Adrenal gland (tissue), 19 donors: ENCODE measurements at regions of chr13 and their contacts with region 1.

Region 1: GRCh38 chr13:113029487-113030258 is 60.7 kb downstream of the MCF2L start:
- DNase-seq: peak in 2 of 7 donors; percentile 34 to 50
- H3K4me3 ChIP-seq: no peak overlapping the region
- H3K27ac ChIP-seq: no peak overlapping the region
- H3K4me1 ChIP-seq: no peaks in the 10 kb centered on the region
- H3K27me3 ChIP-seq: no peaks in the 10 kb centered on the region
- CTCF ChIP-seq: peak; percentile 50 to 69 (median 65)
- POLR2A ChIP-seq: no peak

Region 2: GRCh38 chr13:112783135-112783977 is 246.3 kb before region 1 on chr13:
- intact Hi-C with region 1: no loop called
- DNase-seq: peak in 1 of 7 donors; percentile 48
- H3K4me3 ChIP-seq: no peak overlapping the region
- H3K27ac ChIP-seq: peak overlapping the region; percentile 37 to 91 (median 78)
- H3K4me1 ChIP-seq: peaks cover 12 to 18% of the 10 kb centered on the region in 2 donors
- H3K27me3 ChIP-seq: no peaks in the 10 kb centered on the region
- CTCF ChIP-seq: no peak
- POLR2A ChIP-seq: no peak

Region 3: DNA sequence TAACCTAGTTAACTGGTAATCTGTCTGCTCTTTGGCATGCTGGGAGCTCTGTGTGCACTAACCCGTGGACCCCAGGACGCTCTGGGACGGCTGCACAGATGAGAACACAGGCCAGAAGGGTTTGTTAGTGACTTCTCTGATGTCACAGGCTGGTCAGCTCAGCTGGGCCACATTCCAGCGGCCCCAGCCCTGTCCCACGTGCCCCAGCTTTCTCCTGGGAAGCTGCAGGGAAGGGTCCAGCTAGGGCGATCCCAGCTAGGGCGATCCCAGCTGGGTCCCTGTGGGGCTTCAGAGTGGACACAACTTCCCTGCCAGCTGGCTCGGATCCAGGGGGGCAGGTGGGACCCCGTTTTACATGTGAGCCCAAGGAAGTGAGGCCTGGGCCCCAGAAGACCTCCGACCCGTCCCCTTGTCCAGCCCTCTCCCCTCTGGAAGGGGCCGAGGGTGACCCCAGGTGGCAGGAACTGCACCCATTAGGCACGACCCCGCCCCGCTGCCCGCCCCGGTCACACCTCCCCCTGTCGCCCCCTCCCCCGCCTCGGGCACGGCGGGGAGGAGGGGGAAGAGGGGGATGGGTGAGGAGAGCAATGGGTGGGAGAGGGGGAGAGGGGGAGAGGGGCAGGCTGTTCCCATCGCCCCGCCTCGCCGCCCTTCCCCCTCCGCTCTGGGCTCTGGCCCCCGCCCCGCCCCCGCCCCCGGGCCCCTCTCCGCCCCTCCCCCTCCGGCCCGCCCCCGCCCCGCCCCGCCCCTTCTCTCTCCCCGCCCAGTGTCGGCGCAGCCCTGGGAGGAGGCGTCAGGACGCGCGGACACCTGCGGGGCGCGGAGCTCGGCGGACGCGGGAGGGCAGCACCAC is 135.9 kb before region 1 on chr13:
- intact Hi-C with region 1: no loop called
- DNase-seq: peak in 1 of 7 donors; percentile 42
- H3K4me3 ChIP-seq: peak overlapping the region in 1 of 4 donors; percentile 56
- H3K27ac ChIP-seq: no peak overlapping the region
- H3K4me1 ChIP-seq: peaks cover 6 to 15% of the 10 kb centered on the region in 2 donors
- H3K27me3 ChIP-seq: peaks cover 16% of the 10 kb centered on the region
- CTCF ChIP-seq: no peak
- POLR2A ChIP-seq: no peak

Region 4: GRCh38 chr13:112942689-112943308 is 86.9 kb before region 1 on chr13:
- intact Hi-C with region 1: loop called (anchors 5 kb)
- DNase-seq: peak; percentile 92 to 98 (median 96)
- H3K4me3 ChIP-seq: peak overlapping the region in 2 of 4 donors; percentile 7 to 52
- H3K27ac ChIP-seq: peak overlapping the region in 3 of 5 donors; percentile 15 to 63 (median 23)
- H3K4me1 ChIP-seq: peaks cover 9 to 10% of the 10 kb centered on the region in 2 donors
- H3K27me3 ChIP-seq: no peaks in the 10 kb centered on the region
- CTCF ChIP-seq: peak; percentile 86 to 97 (median 94)
- POLR2A ChIP-seq: no peak

Region 5: DNA sequence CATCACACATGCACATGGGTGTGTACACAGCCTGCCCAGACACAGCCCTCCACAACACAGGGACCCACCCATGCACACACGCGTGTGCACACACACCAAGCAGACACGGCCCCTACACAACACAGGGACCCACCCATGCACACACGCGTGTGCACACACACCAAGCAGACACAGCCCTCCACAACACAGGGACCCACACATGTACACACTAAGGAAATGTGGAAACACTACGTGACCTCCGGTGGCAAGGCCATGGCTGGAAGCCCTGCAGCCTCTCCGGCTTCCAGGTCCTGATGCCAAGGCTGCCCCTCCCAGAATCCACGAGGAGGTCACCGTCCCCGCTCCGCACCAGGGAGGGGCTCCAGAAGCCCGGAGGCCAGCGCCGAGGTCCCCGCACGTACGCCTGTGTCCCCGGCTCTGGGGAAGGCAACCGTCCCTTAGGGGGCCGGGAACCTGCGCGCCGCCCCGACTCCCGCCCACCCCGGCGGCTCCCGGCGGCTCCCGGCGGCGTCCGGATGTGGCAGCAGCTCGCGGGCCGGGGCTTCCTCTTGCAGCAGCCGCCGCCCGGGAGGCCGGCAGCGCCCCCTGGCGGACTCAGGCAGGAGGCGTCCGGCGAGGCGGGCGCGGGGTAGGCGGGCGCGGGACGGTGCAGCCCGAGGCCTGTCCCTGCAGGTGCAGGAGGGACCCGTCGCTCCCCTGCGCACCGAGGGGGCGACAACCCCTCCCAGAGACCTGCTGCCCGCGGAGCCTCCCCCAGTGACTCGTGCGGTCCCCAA is 364.1 kb after region 1 on chr13:
- intact Hi-C with region 1: loop called (anchors 5 to 10 kb)
- DNase-seq: peak; percentile 66 to 88 (median 81)
- H3K4me3 ChIP-seq: peak overlapping the region in 3 of 4 donors; percentile 46 to 94 (median 56)
- H3K27ac ChIP-seq: peak overlapping the region in 1 of 5 donors; percentile 45
- H3K4me1 ChIP-seq: peaks cover 4 to 11% of the 10 kb centered on the region in 2 donors
- H3K27me3 ChIP-seq: no peaks in the 10 kb centered on the region
- CTCF ChIP-seq: peak in 5 of 6 experiments; percentile 15 to 97 (median 92)
- POLR2A ChIP-seq: no peak

Region 6: DNA sequence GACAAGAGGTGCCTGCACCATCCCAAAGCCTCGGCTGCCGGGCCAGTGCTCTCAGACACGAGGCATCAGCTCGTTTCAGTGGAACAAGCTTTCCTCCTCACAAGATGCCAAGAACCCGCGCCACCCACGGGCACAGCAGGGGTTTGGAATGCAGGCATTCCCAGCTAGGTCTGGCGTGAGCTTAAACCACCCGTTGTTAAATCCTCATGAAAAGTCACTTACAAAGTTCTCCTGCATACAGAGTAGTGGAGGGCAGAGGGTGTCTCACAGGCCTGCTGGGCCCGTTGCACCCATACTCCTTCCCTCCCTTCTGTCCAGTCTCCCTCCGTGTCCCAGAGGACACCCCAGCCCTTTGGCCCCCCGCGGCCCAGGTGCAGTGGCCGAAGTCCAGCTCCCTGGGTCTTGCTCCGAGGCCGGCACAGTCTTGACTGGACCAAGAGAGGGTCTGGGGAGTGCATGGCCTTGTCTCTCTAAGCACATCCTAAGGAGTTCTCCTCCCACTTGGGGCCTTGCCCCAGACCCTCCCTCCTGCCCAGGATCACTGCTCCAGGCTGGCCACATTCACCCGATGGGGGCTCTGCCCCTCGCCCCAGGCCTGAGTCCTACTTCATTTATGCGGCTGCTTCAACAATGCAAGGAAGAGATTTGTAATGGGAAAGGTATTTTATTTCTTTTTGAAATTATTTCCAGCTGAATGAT is 369.4 kb after region 1 on chr13:
- intact Hi-C with region 1: loop called (anchors 5 to 10 kb)
- DNase-seq: no peak
- H3K4me3 ChIP-seq: no peak overlapping the region
- H3K27ac ChIP-seq: no peak overlapping the region
- H3K4me1 ChIP-seq: peaks cover 0 to 4% of the 10 kb centered on the region in 2 donors
- H3K27me3 ChIP-seq: peaks cover 4% of the 10 kb centered on the region
- CTCF ChIP-seq: no peak
- POLR2A ChIP-seq: no peak